ENCODE measurements at regions of chrX and their contacts with region 1.

Region 1: DNA sequence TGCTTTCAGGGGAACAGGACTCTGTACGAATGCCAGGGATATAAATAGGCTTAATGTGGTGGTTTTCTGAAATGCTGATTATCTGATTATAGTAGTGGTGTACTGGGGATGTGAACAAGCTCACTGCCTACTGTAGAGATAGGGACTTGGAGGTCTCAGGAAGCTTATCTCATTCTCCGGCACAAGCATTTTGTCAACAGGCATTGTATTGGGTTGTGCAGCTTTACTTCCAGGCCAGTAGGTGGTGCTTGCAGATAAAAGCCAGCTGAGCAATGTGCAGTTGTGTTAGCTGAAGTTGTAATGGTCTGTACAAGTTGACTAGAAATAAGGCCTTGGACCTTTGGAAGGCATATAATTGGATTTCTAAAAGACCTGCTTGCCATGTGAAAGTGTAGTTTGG is 49.5 kb upstream of the TMLHE start:
- DNase-seq: no peak
- H3K4me3 ChIP-seq: no peak overlapping the region
- H3K27ac ChIP-seq: no peak overlapping the region
- H3K4me1 ChIP-seq: no peaks in the 10 kb centered on the region
- H3K27me3 ChIP-seq: no peaks in the 10 kb centered on the region
- CTCF ChIP-seq: peak in 4 of 5 experiments; percentile 18 to 34 (median 26)
- EP300 ChIP-seq: no peak
- POLR2A ChIP-seq: no peak

Region 2: GRCh38 chrX:154967603-154968002 is 694.7 kb before region 1 on chrX:
- in situ Hi-C with region 1: no loop called
- intact Hi-C with region 1: no loop called
- DNase-seq: no peak
- H3K4me3 ChIP-seq: no peak overlapping the region
- H3K27ac ChIP-seq: no peak overlapping the region
- H3K4me1 ChIP-seq: no peaks in the 10 kb centered on the region
- H3K27me3 ChIP-seq: no peaks in the 10 kb centered on the region
- CTCF ChIP-seq: no peak
- EP300 ChIP-seq: no peak
- POLR2A ChIP-seq: no peak

Region 3: GRCh38 chrX:155592981-155593380 is 69.3 kb before region 1 on chrX:
- in situ Hi-C with region 1: no loop called
- intact Hi-C with region 1: loop called (anchors 2 kb)
- DNase-seq: no peak
- H3K4me3 ChIP-seq: no peak overlapping the region
- H3K27ac ChIP-seq: no peak overlapping the region
- H3K4me1 ChIP-seq: no peaks in the 10 kb centered on the region
- H3K27me3 ChIP-seq: no peaks in the 10 kb centered on the region
- CTCF ChIP-seq: no peak
- EP300 ChIP-seq: no peak
- POLR2A ChIP-seq: no peak